ENCODE measurements at regions of chr4 and their contacts with region 1.

Region 1: DNA sequence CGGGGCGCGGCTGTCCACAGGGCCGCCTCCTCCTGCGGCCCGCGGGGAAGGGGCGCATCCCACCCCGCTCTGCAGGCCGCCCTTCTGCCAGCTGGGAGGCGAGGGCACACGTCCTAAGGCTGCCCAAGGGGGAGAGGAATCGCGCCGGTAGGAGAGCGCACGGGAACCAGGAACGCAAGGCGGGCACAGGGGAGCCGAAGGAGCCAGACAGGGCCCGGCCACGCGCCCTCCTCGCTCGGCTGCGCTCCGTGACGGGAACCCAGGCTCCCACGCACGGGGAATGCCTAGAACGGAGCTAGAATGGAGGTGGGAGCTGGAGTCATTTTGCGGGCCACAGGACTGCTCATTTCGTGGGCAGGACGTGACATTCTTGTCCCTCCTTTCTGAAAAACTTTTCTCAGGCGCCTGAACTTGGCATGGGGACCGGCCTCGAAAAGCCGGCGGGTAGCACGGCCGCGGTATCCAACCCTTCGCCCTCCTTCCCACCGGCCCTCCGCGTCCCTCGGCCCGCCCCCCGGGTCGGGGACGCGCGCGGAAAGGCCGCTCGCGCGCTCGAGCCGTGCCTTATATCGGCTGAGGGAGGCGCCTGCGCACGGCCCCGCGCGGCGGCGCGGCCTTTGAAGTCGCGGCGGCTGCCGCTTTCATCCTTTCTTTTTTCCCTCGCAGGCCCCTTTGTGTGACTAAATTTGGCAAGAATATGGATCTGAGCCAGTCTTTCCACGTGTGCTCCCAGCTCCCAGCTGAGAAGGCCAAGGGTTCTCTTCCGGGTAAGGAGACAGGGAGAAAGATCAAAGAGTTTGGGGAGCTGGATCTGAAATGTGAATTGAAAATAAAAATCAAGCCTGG is 4.2 kb upstream of the LEF1 start:
- DNase-seq: peak; percentile 39 to 85 (median 72)
- ATAC-seq: peak; percentile 46
- H3K4me3 ChIP-seq: peak overlapping the region; percentile 71 to 82
- H3K4me3 Mint-ChIP-seq: peak overlapping the region; percentile 92
- H3K27ac ChIP-seq: peak overlapping the region; percentile 48 to 71
- H3K27ac Mint-ChIP-seq: peak overlapping the region; percentile 93
- H3K4me1 ChIP-seq: peaks cover 39% of the 10 kb centered on the region
- H3K4me1 Mint-ChIP-seq: peaks cover 58% of the 10 kb centered on the region
- H3K27me3 ChIP-seq: peaks cover 0 to 26% of the 10 kb centered on the region in 2 experiments
- H3K27me3 Mint-ChIP-seq: peaks cover 3% of the 10 kb centered on the region
- CTCF ChIP-seq: no peak

Region 2: DNA sequence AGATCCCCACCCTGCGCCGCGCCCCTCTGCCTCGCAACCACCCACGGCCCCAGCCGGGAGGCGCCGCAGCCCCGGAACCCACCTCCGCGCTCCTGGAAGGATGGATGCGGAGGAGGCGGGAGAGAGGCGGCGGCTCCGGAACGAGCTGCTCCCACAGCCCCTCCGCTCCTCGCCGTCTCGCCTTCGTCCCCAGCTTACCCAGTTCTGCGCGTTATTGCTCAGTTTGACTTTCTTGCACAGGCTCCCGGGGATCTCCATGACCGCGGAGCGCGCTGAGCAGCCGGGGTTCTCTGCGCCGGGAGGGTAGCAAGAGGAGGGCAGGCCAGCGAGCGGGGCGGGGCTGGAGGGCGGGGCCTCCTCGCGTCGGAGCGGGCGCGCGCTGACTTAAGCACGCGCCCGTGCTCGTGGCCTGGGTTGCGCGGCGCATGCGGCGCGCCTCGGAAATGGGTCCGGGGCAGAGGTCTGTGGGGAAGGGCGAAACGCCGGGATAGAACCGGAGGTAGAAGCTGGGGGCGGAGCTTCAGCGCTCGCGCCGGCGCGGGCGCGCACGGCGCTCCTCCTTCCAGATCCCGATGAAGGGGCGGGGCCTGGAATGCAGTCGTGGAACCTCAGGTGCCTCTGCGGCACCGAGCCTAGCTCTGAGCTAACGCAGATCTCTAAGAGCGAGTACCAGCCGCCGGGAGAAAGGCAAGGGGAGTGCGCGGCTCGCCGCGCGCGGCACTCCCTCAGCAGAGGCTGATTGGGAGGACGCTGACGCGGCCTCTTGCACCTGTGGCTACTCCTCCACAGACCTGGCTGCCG is 452.9 kb before region 1 on chr4 and contains the start of gene PAPSS1:
- CTCF ChIA-PET with region 1: no interaction called
- POLR2A ChIA-PET with region 1: no interaction called
- intact Hi-C with region 1: loop called in 1 of 2 experiments (anchors 10 kb)
- DNase-seq: peak; percentile 87 to 99 (median 96)
- ATAC-seq: peak; percentile 85
- H3K4me3 ChIP-seq: peak within 1 kb of the TSS; percentile 65 to 92
- H3K4me3 Mint-ChIP-seq: peak within 1 kb of the TSS; percentile 91
- H3K27ac ChIP-seq: peak within 1 kb of the TSS; percentile 64 to 82
- H3K27ac Mint-ChIP-seq: peak within 1 kb of the TSS; percentile 93
- H3K4me1 ChIP-seq: peaks cover 13% of the 10 kb centered on the region
- H3K4me1 Mint-ChIP-seq: peaks cover 40% of the 10 kb centered on the region
- H3K27me3 ChIP-seq: no peaks in the 10 kb centered on the region
- H3K27me3 Mint-ChIP-seq: no peaks in the 10 kb centered on the region
- CTCF ChIP-seq: no peak
- total RNA-seq, gene PAPSS1: 5.2 to 5.3 TPM

Region 3: GRCh38 chr4:108036213-108036612 is 136.8 kb before region 1 on chr4:
- CTCF ChIA-PET with region 1: interaction called, 11 read pairs
- POLR2A ChIA-PET with region 1: interaction called, 10 read pairs
- intact Hi-C with region 1: loop called (anchors 2 kb)
- DNase-seq: peak; percentile 37 to 89 (median 74)
- ATAC-seq: peak; percentile 96
- H3K4me3 ChIP-seq: peak overlapping the region in 1 of 2 experiments; percentile 29
- H3K4me3 Mint-ChIP-seq: peak overlapping the region; percentile 71
- H3K27ac ChIP-seq: peak overlapping the region; percentile 49 to 51
- H3K27ac Mint-ChIP-seq: peak overlapping the region; percentile 97
- H3K4me1 ChIP-seq: peaks cover 62% of the 10 kb centered on the region
- H3K4me1 Mint-ChIP-seq: peaks cover 57% of the 10 kb centered on the region
- H3K27me3 ChIP-seq: no peaks in the 10 kb centered on the region
- H3K27me3 Mint-ChIP-seq: no peaks in the 10 kb centered on the region
- CTCF ChIP-seq: no peak

Region 4: GRCh38 chr4:108109997-108110416 is 63.0 kb before region 1 on chr4:
- CTCF ChIA-PET with region 1: interaction called, 3 read pairs
- POLR2A ChIA-PET with region 1: interaction called, 5 read pairs
- intact Hi-C with region 1: loop called in 1 of 2 experiments (anchors 5 kb)
- DNase-seq: no peak
- ATAC-seq: no peak
- H3K4me3 ChIP-seq: peak overlapping the region in 1 of 2 experiments; percentile 7
- H3K4me3 Mint-ChIP-seq: peak overlapping the region; percentile 61
- H3K27ac ChIP-seq: peak overlapping the region; percentile 6 to 19
- H3K27ac Mint-ChIP-seq: peak overlapping the region; percentile 98
- H3K4me1 ChIP-seq: peaks cover 98% of the 10 kb centered on the region
- H3K4me1 Mint-ChIP-seq: peaks cover 86% of the 10 kb centered on the region
- H3K27me3 ChIP-seq: no peaks in the 10 kb centered on the region
- H3K27me3 Mint-ChIP-seq: no peaks in the 10 kb centered on the region
- CTCF ChIP-seq: no peak

Region 5: DNA sequence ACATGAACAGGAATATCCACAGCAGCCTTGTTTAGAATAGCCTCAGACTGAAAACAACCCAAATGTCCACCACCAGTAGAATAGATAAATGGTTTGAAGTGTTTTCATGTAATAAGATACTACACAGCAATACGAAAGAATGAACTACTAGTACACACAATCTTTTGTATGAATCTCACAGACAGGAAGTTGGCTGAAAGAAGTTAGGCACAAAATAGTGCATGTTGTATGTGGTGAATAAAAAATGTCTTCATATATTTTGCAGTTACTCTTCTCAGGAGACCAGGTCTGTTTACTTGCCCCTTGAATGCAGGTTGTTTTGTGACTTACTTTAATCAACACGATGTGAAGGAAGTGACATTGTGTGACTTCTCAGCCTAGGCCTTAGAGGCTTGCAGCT is 71.6 kb after region 1 on chr4:
- CTCF ChIA-PET with region 1: no interaction called
- POLR2A ChIA-PET with region 1: no interaction called
- intact Hi-C with region 1: loop called in 1 of 2 experiments (anchors 2 kb)
- DNase-seq: no peak
- ATAC-seq: no peak
- H3K4me3 ChIP-seq: no peak overlapping the region
- H3K4me3 Mint-ChIP-seq: no peak overlapping the region
- H3K27ac ChIP-seq: no peak overlapping the region
- H3K27ac Mint-ChIP-seq: peak overlapping the region; percentile 28
- H3K4me1 ChIP-seq: peaks cover 3% of the 10 kb centered on the region
- H3K4me1 Mint-ChIP-seq: peaks cover 12% of the 10 kb centered on the region
- H3K27me3 ChIP-seq: no peaks in the 10 kb centered on the region
- H3K27me3 Mint-ChIP-seq: no peaks in the 10 kb centered on the region
- CTCF ChIP-seq: no peak

Region 6: GRCh38 chr4:108512615-108513505 is 339.9 kb after region 1 on chr4:
- CTCF ChIA-PET with region 1: interaction called, 6 read pairs
- POLR2A ChIA-PET with region 1: interaction called, 3 read pairs
- intact Hi-C with region 1: loop called in 1 of 2 experiments (anchors 2 kb)
- DNase-seq: peak in 8 of 9 experiments; percentile 18 to 71 (median 54)
- ATAC-seq: peak; percentile 93
- H3K4me3 ChIP-seq: peak overlapping the region in 1 of 2 experiments; percentile 17
- H3K4me3 Mint-ChIP-seq: peak overlapping the region; percentile 82
- H3K27ac ChIP-seq: no peak overlapping the region
- H3K27ac Mint-ChIP-seq: peak overlapping the region; percentile 57
- H3K4me1 ChIP-seq: peaks cover 16% of the 10 kb centered on the region
- H3K4me1 Mint-ChIP-seq: peaks cover 29% of the 10 kb centered on the region
- H3K27me3 ChIP-seq: no peaks in the 10 kb centered on the region
- H3K27me3 Mint-ChIP-seq: no peaks in the 10 kb centered on the region
- CTCF ChIP-seq: peak; percentile 53